Ovary (tissue), 10 donors: ENCODE measurements at regions of chr5 and their contacts with region 1.

Region 1: DNA sequence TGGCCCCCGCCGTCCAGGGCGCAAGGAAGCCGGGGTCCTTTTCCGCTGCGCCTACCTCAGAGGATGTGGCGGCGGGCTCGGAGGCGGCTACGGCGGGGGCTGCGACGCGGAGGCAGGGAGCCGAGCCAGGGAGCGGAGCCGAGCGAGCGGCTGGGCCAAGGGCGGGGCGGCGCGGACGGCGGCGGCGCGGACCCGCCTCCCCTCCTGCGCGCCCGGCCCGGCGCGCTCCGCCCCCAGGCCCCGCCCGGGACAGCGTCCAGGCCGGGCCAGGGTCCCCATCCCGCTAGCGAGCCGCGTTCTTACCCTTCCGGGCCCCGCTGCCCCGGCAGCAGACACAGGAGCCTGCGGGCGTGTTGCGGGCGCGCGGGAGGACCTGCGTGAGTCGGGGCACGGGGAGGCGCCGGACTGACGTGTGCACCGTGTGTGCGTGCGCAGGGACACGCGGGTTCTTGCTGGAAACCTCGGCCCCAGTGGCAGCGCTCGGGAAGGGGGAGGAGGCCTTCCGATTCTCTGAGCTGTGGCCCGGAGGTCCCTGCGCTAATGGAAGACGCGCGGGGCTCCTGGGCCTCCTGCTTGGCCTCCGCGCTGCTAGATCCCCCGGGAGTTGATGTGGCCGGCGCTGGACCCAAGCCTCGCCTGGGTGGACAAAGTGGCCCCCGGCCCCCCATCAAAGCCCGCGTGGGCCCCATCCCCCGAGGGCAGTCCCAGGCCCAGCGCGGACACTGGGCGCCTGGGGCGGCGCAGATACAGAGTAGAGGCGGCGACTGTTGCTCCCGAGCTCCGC is at the start of gene VDAC1:
- DNase-seq: peak; percentile 77 to 88 (median 85)
- H3K4me3 ChIP-seq: peak within 1 kb of the TSS; percentile 69
- H3K27ac ChIP-seq: peak within 1 kb of the TSS; percentile 99 to 100
- H3K4me1 ChIP-seq: peaks cover 16% of the 10 kb centered on the region
- H3K27me3 ChIP-seq: no peaks in the 10 kb centered on the region
- CTCF ChIP-seq: peak in 2 of 3 donors; percentile 20 to 29
- EP300 ChIP-seq: peak; percentile 21
- POLR2A ChIP-seq: peak; percentile 77
- total RNA-seq, gene VDAC1: 41.1 to 95.1 (median 89.9) TPM

Region 2: DNA sequence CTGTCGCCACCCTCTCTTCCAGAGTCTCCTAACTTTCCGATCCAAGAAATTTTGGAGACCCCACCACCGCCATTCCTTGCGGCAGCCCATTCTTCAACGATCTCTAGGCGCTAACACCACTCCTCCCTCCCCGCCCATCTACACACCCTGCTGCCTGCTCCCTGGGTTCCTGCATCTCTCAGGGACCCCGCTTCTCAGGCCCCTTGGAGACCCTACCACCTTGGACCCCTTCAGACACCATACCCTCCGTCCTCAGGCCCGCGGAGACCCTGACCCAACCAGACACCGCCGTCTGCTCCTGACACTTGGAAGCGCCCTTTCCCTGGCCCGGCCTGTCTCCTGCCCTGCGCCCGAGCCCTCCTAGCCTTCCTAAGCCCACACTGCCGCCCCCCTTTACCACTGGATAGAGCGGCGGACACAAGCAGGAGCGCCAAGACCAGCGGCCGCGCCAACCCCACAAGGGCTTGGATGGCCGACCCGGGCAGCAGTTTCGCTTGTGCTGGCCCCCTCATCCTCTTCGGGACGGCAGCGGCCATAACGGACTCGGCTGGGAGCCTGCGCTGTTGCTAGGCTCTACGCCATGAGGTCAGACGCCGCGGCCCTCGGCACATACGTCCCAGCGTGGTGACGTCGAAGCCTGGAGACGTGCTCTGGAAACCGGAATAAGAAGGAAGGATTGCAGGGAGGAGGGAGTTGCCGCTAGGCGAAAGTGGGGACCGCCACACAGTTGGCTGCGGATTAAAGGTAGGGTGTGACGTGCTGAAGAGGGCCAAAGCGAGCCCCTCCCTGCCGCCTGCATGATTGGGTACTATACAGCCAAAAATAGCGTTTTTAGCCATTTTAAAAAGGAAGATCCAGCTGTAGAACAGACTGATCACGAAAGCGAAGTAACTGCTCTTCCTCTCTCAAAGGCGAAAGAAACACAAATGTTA is 36.5 kb before region 1 on chr5 and contains the start of gene C5orf15:
- intact Hi-C with region 1: loop called in 1 of 4 experiments (anchors 2 kb)
- DNase-seq: peak; percentile 92 to 96 (median 94)
- H3K4me3 ChIP-seq: peak within 1 kb of the TSS; percentile 74
- H3K27ac ChIP-seq: peak within 1 kb of the TSS; percentile 80 to 92
- H3K4me1 ChIP-seq: peaks cover 2% of the 10 kb centered on the region
- H3K27me3 ChIP-seq: no peaks in the 10 kb centered on the region
- CTCF ChIP-seq: peak in 2 of 3 donors; percentile 14 to 20
- EP300 ChIP-seq: no peak
- POLR2A ChIP-seq: peak; percentile 71
- total RNA-seq, gene C5orf15: 26.9 to 62.2 (median 33.4) TPM